ENCODE measurements at regions of chr2 and their contacts with region 1.

Region 1: GRCh38 chr2:26764078-26764887 is at the start of gene SLC35F6:
- DNase-seq: peak; percentile 70 to 90 (median 86)
- ATAC-seq: peak; percentile 95
- H3K4me3 ChIP-seq: peak within 1 kb of the TSS; percentile 92
- H3K4me3 Mint-ChIP-seq: peak within 1 kb of the TSS; percentile 85 to 97 (median 94)
- H3K27ac ChIP-seq: peak within 1 kb of the TSS; percentile 82
- H3K27ac Mint-ChIP-seq: peak within 1 kb of the TSS; percentile 62 to 97 (median 91)
- H3K4me1 ChIP-seq: peaks cover 23% of the 10 kb centered on the region in 2 donors
- H3K4me1 Mint-ChIP-seq: peaks cover 28 to 54% (median 39%) of the 10 kb centered on the region in 7 donors
- H3K27me3 ChIP-seq: no peaks in the 10 kb centered on the region
- H3K27me3 Mint-ChIP-seq: peaks cover 0 to 6% (median 0%) of the 10 kb centered on the region in 5 donors
- total RNA-seq, gene SLC35F6: 17.3 to 22.5 (median 19.9) TPM

Region 2: GRCh38 chr2:26184555-26185303 is 579.6 kb before region 1 on chr2:
- CTCF ChIA-PET with region 1: no interaction called
- POLR2A ChIA-PET with region 1: no interaction called
- intact Hi-C with region 1: loop called in 1 of 2 experiments (anchors 10 kb)
- DNase-seq: peak; percentile 82 to 91 (median 88)
- ATAC-seq: peak; percentile 98
- H3K4me3 ChIP-seq: peak overlapping the region; percentile 68
- H3K4me3 Mint-ChIP-seq: peak overlapping the region; percentile 79 to 91 (median 85)
- H3K27ac ChIP-seq: peak overlapping the region; percentile 71
- H3K27ac Mint-ChIP-seq: peak overlapping the region in 7 of 9 donors; percentile 25 to 90 (median 67)
- H3K4me1 ChIP-seq: peaks cover 5 to 8% of the 10 kb centered on the region in 2 donors
- H3K4me1 Mint-ChIP-seq: peaks cover 6 to 30% (median 23%) of the 10 kb centered on the region in 7 donors
- H3K27me3 ChIP-seq: no peaks in the 10 kb centered on the region
- H3K27me3 Mint-ChIP-seq: peaks cover 11 to 23% (median 15%) of the 10 kb centered on the region in 5 donors

Region 3: DNA sequence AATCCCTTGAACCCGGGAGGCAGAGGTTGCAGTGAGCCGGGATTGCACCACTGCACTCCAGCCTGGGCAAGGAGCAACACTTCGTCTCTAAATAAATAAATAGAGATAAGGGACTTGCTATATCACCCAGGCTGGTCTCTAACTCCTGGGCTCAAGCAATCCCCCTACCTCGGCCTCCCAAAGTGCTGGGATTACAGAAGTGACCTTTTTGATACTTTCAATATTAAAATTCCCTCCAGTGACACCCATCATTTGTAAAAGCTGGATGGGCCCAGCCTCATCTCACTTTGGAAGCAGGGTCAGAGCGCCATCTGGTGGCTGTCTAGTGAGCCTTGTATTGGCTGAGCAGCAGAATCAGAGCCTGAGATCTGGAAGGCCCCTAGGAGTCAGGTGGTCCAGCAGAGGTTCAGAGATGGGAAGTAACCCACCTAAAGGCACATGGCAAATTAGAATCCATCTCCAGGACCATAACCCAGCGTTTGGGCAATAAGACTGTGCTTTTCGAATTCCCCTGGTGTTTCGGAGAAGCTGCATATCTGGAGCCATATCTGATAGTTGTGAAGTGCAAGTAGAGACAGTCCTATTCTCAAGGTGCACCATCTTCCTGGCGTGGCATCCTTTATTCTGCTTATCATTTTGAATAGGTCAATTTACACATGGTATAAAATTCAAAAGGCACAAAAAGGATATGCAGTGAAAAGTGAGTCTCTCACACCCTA is 18.5 kb before region 1 on chr2:
- CTCF ChIA-PET with region 1: no interaction called
- POLR2A ChIA-PET with region 1: no interaction called
- intact Hi-C with region 1: no loop called
- DNase-seq: peak; percentile 42 to 75 (median 64)
- ATAC-seq: peak; percentile 84
- H3K4me3 ChIP-seq: no peak overlapping the region
- H3K4me3 Mint-ChIP-seq: no peak overlapping the region
- H3K27ac ChIP-seq: no peak overlapping the region
- H3K27ac Mint-ChIP-seq: no peak overlapping the region
- H3K4me1 ChIP-seq: no peaks in the 10 kb centered on the region
- H3K4me1 Mint-ChIP-seq: peaks cover 0 to 9% (median 4%) of the 10 kb centered on the region in 7 donors
- H3K27me3 ChIP-seq: no peaks in the 10 kb centered on the region
- H3K27me3 Mint-ChIP-seq: peaks cover 0 to under 1% (median 0%) of the 10 kb centered on the region in 5 donors